Sigmoid colon (tissue), 7 donors: ENCODE measurements at regions of chr11 and their contacts with region 1.

Region 1: GRCh38 chr11:72112321-72113219 is at the start of gene ANAPC15:
- DNase-seq: peak; percentile 100
- H3K4me3 ChIP-seq: peak within 1 kb of the TSS; percentile 56 to 68 (median 62)
- H3K27ac ChIP-seq: peak within 1 kb of the TSS; percentile 91 to 98 (median 96)
- H3K4me1 ChIP-seq: peaks cover 0 to 19% (median 13%) of the 10 kb centered on the region in 4 donors
- H3K27me3 ChIP-seq: no peaks in the 10 kb centered on the region
- CTCF ChIP-seq: no peak
- EP300 ChIP-seq: no peak
- POLR2A ChIP-seq: peak; percentile 70 to 94
- total RNA-seq, gene ANAPC15: 48.5 to 77.1 (median 57.8) TPM

Region 2: DNA sequence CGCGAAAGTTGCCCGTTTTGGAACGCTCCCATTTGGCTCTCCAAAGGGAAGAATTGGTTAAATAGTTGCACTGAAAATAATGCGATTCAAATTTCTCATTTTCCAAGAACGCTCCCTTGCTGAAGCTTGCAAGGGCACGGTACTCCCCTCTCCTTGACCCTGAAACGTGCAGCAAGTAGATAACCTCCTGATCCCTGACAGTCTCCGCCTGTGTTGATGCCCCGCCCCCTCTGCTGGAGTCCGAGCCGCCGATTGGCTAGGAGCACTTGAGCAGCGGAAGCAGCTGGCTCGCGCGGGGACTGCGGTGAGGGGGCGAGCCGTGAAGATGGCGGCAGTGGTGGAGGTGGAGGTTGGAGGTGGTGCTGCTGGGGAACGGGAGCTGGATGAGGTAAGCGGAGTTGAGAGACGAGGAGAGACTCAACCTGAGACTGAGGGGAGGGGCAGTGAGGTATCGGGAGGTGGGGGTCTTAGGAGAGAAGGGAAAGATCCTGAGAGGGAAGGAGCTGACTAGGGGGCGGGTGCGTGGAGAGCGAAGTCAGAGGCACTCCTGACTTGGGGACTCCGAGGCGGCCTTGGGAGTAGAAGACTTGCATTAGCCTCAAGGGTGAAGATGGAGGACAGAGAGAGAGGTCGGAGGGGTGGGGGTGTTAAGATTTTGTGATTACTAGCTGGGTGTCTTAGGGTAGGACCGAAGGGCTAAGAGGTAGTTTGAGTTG is 183.7 kb before region 1 on chr11 and contains the start of gene RNF121:
- intact Hi-C with region 1: loop called (anchors 1 kb)
- DNase-seq: peak; percentile 98
- H3K4me3 ChIP-seq: peak within 1 kb of the TSS; percentile 65 to 93 (median 80)
- H3K27ac ChIP-seq: peak within 1 kb of the TSS; percentile 83 to 91 (median 86)
- H3K4me1 ChIP-seq: peaks cover 0 to 44% (median 34%) of the 10 kb centered on the region in 4 donors
- H3K27me3 ChIP-seq: no peaks in the 10 kb centered on the region
- CTCF ChIP-seq: no peak
- EP300 ChIP-seq: no peak
- POLR2A ChIP-seq: peak; percentile 62 to 71
- total RNA-seq, gene RNF121: 25.2 to 34.6 (median 25.3) TPM

Region 3: GRCh38 chr11:72040726-72041441 is 71.7 kb before region 1 on chr11:
- intact Hi-C with region 1: loop called (anchors 1 kb)
- DNase-seq: peak; percentile 99
- H3K4me3 ChIP-seq: peak overlapping the region; percentile 50 to 68 (median 62)
- H3K27ac ChIP-seq: peak overlapping the region; percentile 96 to 98 (median 97)
- H3K4me1 ChIP-seq: peaks cover 0 to 76% (median 67%) of the 10 kb centered on the region in 4 donors
- H3K27me3 ChIP-seq: no peaks in the 10 kb centered on the region
- CTCF ChIP-seq: no peak
- EP300 ChIP-seq: peak in 2 of 4 donors; percentile 28 to 47
- POLR2A ChIP-seq: peak in 1 of 2 donors; percentile 57

Region 4: GRCh38 chr11:72080256-72080974 is 32.2 kb before region 1 on chr11 and contains the starts of genes LRRC51 and NUMA1:
- intact Hi-C with region 1: loop called (anchors 2 kb)
- DNase-seq: peak; percentile 100
- H3K4me3 ChIP-seq: peak within 1 kb of the TSS; percentile 66 to 81 (median 72)
- H3K27ac ChIP-seq: peak within 1 kb of the TSS; percentile 91 to 94 (median 92)
- H3K4me1 ChIP-seq: peaks cover 0 to 26% (median 23%) of the 10 kb centered on the region in 4 donors
- H3K27me3 ChIP-seq: no peaks in the 10 kb centered on the region
- CTCF ChIP-seq: no peak
- EP300 ChIP-seq: no peak
- POLR2A ChIP-seq: peak; percentile 49 to 52
- total RNA-seq, gene LRRC51: 3.2 to 14.8 (median 6.4) TPM
- total RNA-seq, gene NUMA1: 249 to 343 (median 265) TPM

Region 5: DNA sequence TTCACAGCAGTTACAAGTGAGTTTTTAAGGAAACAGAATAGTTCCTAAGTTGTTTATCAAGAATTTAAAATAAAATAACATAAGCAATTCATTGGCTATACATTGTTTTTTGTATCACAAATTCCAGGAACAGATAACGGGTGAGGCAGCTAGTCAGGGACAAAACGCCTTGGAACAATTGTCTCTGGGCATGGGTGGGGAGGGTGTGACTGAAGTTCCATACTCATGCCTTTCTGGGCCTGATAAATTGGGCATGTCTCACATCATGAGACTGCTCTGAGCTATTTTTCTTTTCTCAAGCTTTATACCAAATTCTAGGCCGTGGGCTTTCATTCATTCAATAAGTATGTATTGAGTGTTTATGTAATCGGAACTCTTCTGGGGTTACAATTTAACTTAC is 44.6 kb after region 1 on chr11:
- intact Hi-C with region 1: no loop called
- DNase-seq: no peak
- H3K4me3 ChIP-seq: no peak overlapping the region
- H3K27ac ChIP-seq: no peak overlapping the region
- H3K4me1 ChIP-seq: no peaks in the 10 kb centered on the region
- H3K27me3 ChIP-seq: no peaks in the 10 kb centered on the region
- CTCF ChIP-seq: no peak
- EP300 ChIP-seq: no peak
- POLR2A ChIP-seq: no peak

Region 6: GRCh38 chr11:72222907-72223614 is 110.5 kb after region 1 on chr11:
- intact Hi-C with region 1: loop called (anchors 5 kb)
- DNase-seq: peak; percentile 98
- H3K4me3 ChIP-seq: peak overlapping the region; percentile 65 to 91 (median 80)
- H3K27ac ChIP-seq: peak overlapping the region; percentile 95 to 99 (median 98)
- H3K4me1 ChIP-seq: peaks cover 2 to 44% (median 39%) of the 10 kb centered on the region in 4 donors
- H3K27me3 ChIP-seq: no peaks in the 10 kb centered on the region
- CTCF ChIP-seq: peak in 2 of 4 experiments; percentile 11 to 24
- EP300 ChIP-seq: no peak
- POLR2A ChIP-seq: peak; percentile 74 to 84

Region 7: DNA sequence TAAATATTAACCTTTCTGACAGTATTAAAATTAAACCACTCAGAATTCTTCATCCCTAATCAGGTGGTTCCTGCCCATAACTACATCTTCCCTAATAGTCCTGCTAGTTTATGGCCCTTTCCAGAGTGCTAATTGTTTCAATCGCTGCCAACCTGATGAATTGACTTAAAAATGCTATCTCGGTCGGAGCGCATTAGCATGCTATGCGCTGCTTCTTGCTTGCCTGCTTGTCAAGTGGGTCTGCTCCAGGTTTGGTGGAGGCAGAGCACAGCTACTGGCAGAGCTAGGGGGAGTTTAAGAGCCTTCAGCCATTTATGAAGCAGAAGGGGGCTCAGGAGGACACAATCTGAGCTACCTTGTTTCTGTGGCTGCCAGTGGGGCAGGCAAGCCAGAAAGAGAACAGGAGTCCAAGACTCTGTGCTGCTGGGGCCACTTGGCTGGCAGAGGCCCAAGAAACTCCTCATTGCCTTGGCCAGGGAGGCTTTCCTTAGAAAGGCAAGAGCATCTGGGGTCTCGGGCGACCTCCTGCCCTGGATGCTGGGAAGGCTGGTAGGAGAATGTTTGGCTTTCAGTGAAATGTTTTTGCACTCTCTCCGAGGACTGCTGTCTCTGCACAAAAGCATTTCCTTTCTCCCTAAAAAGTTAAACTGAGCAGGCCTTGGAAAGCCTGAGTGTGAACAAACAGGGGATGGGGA is 193.5 kb after region 1 on chr11:
- intact Hi-C with region 1: no loop called
- DNase-seq: no peak
- H3K4me3 ChIP-seq: no peak overlapping the region
- H3K27ac ChIP-seq: peak overlapping the region in 3 of 4 donors; percentile 11 to 58 (median 47)
- H3K4me1 ChIP-seq: peaks cover 0 to 51% (median 34%) of the 10 kb centered on the region in 4 donors
- H3K27me3 ChIP-seq: no peaks in the 10 kb centered on the region
- CTCF ChIP-seq: no peak
- EP300 ChIP-seq: no peak
- POLR2A ChIP-seq: no peak

Region 8: DNA sequence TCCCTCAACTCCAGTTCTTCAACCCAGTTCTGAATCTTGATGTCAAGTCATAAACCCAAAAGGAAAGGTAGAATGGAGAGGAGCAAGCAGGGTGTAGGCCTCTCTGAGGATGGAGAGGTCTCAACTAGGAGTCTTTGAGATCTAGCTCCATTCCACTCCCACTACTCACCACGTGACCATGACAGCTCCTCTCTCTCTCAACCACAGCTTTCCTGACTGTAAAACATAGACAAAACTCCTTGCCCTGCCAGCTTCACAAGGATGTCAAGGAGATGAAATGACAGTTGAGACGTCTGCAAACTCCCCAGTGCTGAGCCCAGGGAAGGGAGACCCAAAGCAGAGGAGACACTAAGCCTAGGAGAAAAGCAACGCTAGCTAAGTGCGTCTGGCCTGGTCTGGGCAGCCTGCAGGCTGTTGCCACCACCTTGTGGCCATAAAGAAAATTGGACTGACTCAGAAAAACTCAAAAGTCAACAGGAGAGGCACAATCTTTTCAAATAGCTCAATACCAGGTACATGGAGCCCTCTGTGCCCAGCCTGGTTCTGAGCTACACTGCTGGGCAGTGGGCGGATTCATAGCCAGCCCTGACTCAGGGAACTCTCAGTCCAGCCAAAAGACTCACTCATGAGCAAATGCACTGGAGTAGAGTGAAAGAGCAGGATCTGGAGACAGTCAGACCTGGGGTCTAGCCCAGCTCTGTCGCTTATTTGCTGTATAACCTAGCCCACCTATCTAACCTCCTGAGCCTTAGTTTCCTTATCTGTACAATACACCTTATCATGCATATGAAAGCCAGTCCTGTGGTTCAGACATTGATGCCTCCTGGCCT is 318.4 kb after region 1 on chr11:
- intact Hi-C with region 1: loop called (anchors 10 kb)
- DNase-seq: no peak
- H3K4me3 ChIP-seq: no peak overlapping the region
- H3K27ac ChIP-seq: no peak overlapping the region
- H3K4me1 ChIP-seq: peaks cover 0 to 29% (median 19%) of the 10 kb centered on the region in 4 donors
- H3K27me3 ChIP-seq: no peaks in the 10 kb centered on the region
- CTCF ChIP-seq: peak; percentile 9 to 67 (median 57)
- EP300 ChIP-seq: no peak
- POLR2A ChIP-seq: no peak

Region 9: GRCh38 chr11:72561856-72562255 is 449.3 kb after region 1 on chr11:
- intact Hi-C with region 1: no loop called
- DNase-seq: no peak
- H3K4me3 ChIP-seq: no peak overlapping the region
- H3K27ac ChIP-seq: no peak overlapping the region
- H3K4me1 ChIP-seq: no peaks in the 10 kb centered on the region
- H3K27me3 ChIP-seq: no peaks in the 10 kb centered on the region
- CTCF ChIP-seq: no peak
- EP300 ChIP-seq: no peak
- POLR2A ChIP-seq: no peak

Region 10: DNA sequence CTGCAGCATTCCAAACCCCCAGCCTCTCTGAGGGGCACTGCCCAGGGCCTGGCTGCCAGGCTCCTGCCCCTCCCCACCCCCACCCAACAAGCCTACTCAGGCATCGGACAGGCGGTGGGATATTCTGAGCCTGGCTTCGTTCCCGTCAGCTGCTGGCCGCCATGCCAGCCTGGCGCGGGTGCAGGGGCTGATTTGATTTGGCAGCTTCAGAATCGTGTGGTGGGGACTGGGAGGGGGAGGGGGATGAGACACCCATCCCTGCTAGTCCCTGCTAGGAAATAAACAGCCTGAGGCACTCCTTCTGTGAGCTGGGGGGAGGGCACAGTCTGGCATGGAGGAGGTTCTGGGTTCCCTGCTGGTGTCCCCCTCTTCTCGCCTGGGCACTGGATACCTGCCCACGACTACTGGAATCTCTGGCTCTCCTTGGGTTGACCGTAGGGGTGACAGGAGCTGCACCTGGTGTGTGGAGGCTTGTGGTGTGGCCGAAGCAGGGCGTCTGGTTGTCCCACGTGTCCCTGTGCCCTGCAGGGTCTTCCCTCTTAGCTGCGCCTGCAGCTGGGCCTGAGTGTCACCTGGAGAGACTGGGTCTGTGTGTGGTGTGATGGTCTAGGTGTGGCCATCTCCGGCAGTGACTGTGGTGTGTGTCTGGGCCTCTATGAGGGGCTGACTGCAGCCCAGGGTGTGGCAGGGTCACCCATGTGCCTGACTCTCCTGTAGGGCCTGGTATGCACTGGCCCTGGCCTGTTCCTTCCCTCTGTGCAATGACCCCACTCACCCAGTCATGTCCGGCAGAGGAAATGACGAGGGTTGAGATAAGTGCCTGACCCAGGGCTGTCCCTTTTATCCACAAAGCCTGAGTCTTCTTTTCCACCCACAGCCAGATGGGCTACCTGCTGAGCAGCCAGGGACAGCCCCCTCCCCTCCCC is 519.5 kb after region 1 on chr11:
- intact Hi-C with region 1: no loop called
- DNase-seq: peak; percentile 85
- H3K4me3 ChIP-seq: no peak overlapping the region
- H3K27ac ChIP-seq: peak overlapping the region; percentile 50 to 92 (median 91)
- H3K4me1 ChIP-seq: peaks cover 0 to 90% (median 75%) of the 10 kb centered on the region in 4 donors
- H3K27me3 ChIP-seq: no peaks in the 10 kb centered on the region
- CTCF ChIP-seq: no peak
- EP300 ChIP-seq: no peak
- POLR2A ChIP-seq: no peak